Esophagus muscularis mucosa (tissue), 4 donors: ENCODE measurements at regions of chr1 and their contacts with region 1.

Region 1: DNA sequence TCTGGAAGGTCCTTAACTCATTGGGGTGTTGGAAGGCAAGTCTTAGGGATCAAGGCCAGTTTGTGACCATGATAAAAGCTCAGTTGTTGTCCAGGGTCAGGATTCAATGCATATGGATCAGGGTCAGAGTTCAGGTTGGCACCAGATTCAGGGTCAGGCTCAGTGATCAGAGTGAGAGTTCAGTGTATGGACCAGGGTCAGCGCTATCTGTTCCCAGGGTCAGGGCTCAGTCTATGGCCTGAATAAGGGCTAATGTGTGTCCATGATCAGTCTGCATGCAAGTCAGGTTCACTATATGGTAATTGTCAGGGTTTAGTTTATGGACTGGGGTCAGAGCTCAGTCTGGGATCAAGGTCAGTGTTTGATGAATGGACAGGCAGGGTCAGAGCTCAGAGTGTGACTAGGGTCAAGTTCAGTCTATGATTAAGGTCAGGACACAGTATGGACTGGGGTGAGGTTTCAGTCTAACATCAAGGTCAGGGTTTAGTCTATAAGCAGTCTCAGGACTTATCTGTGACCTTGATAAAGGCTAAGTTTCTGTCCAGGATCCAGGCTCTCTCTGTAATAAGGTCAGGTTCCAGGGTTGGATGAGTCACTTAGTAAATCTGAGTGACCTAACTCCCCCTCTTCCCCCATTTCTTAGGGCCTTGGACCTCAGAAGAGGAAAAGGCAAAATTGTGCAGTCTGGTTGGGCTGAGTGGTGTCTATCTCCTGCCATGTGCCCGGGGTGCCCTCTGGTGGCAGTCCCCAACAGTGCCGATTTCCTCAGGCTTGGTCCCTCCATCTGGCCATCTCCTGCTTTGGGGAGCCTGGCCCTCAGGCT is 23.8 kb downstream of the KNCN start:
- DNase-seq: peak; percentile 95
- H3K4me3 ChIP-seq: no peak overlapping the region
- H3K27ac ChIP-seq: no peak overlapping the region
- H3K4me1 ChIP-seq: peaks cover 3 to 14% (median 5%) of the 10 kb centered on the region in 4 donors
- H3K27me3 ChIP-seq: peaks cover 0 to 50% (median 0%) of the 10 kb centered on the region in 4 donors
- CTCF ChIP-seq: peak; percentile 90 to 95 (median 94)
- EP300 ChIP-seq: no peak
- POLR2A ChIP-seq: no peak

Region 2: GRCh38 chr1:46401964-46402626 is 125.6 kb before region 1 on chr1:
- intact Hi-C with region 1: loop called (anchors 2 kb)
- DNase-seq: no peak
- H3K4me3 ChIP-seq: peak overlapping the region in 1 of 4 donors; percentile 14
- H3K27ac ChIP-seq: peak overlapping the region in 3 of 4 donors; percentile 40 to 53 (median 45)
- H3K4me1 ChIP-seq: peaks cover 17 to 31% (median 27%) of the 10 kb centered on the region in 4 donors
- H3K27me3 ChIP-seq: no peaks in the 10 kb centered on the region
- CTCF ChIP-seq: no peak
- EP300 ChIP-seq: no peak
- POLR2A ChIP-seq: no peak

Region 3: GRCh38 chr1:46446646-46447498 is 80.8 kb before region 1 on chr1:
- intact Hi-C with region 1: loop called (anchors 1 kb)
- DNase-seq: no peak
- H3K4me3 ChIP-seq: no peak overlapping the region
- H3K27ac ChIP-seq: no peak overlapping the region
- H3K4me1 ChIP-seq: peaks cover 4 to 27% (median 25%) of the 10 kb centered on the region in 4 donors
- H3K27me3 ChIP-seq: peaks cover 0 to 58% (median 15%) of the 10 kb centered on the region in 4 donors
- CTCF ChIP-seq: peak; percentile 77 to 87 (median 86)
- EP300 ChIP-seq: no peak
- POLR2A ChIP-seq: no peak

Region 4: GRCh38 chr1:46477153-46477929 is 50.3 kb before region 1 on chr1:
- intact Hi-C with region 1: loop called (anchors 2 kb)
- DNase-seq: peak; percentile 95
- H3K4me3 ChIP-seq: no peak overlapping the region
- H3K27ac ChIP-seq: no peak overlapping the region
- H3K4me1 ChIP-seq: no peaks in the 10 kb centered on the region
- H3K27me3 ChIP-seq: peaks cover 0 to 70% (median 0%) of the 10 kb centered on the region in 4 donors
- CTCF ChIP-seq: peak; percentile 72 to 95 (median 79)
- EP300 ChIP-seq: no peak
- POLR2A ChIP-seq: no peak